SK-N-SH (cell line): ENCODE measurements at regions of chr2 and their contacts with region 1.

Region 1: GRCh38 chr2:175690113-175690837 is 311.8 kb downstream of the LNPK start:
- DNase-seq: peak; percentile 24
- H3K4me3 ChIP-seq: no peak overlapping the region
- H3K27ac ChIP-seq: no peak overlapping the region
- H3K4me1 ChIP-seq: peaks cover 0 to 15% of the 10 kb centered on the region in 2 experiments; a peak in 2 of 4 replicates
- H3K27me3 ChIP-seq: peaks cover 8% of the 10 kb centered on the region; the same call in 1 of the 2 replicates
- CTCF ChIP-seq: peak; percentile 83
- EP300 ChIP-seq: no peak
- RAD21 ChIP-seq: peak; percentile 90

Region 2: DNA sequence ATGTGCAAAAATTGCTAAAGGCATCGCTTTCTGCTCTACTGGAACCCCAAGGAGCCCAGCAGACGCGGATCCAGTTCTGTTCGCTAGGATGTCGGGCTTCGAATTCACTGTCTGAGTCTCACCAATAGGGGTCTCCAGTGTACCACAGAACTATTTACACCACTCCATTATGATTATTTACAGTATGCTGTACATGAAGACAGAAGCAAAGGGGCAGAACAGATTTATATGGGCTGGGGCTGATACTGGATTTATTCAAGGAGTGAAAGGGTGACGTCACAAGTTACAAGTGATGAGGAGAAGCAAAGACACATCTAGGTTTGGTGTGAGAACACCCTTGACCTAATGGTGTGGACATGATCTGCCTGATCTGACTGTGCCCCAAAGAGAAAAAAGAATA is 323.5 kb before region 1 on chr2:
- CTCF ChIA-PET with region 1: interaction called, 99 read pairs
- POLR2A ChIA-PET with region 1: no interaction called
- DNase-seq: peak; percentile 49
- H3K4me3 ChIP-seq: peak overlapping the region in 1 of 2 experiments; percentile 47; a peak in 1 of 4 replicates
- H3K27ac ChIP-seq: no peak overlapping the region
- H3K4me1 ChIP-seq: peaks cover 0 to 19% of the 10 kb centered on the region in 2 experiments; a peak in 2 of 4 replicates
- H3K27me3 ChIP-seq: no peaks in the 10 kb centered on the region; the same call in 1 of the 2 replicates
- CTCF ChIP-seq: peak; percentile 83
- EP300 ChIP-seq: no peak; a peak in 1 of 4 replicates
- RAD21 ChIP-seq: peak; percentile 94

Region 3: GRCh38 chr2:176001916-176002687 is 311.8 kb after region 1 on chr2 and contains the start of gene LNPK:
- CTCF ChIA-PET with region 1: interaction called, 32 read pairs
- POLR2A ChIA-PET with region 1: interaction called, 5 read pairs
- DNase-seq: peak; percentile 97
- H3K4me3 ChIP-seq: peak within 1 kb of the TSS; percentile 77 to 91
- H3K27ac ChIP-seq: peak within 1 kb of the TSS; percentile 58 to 91; a peak in 3 of 4 replicates
- H3K4me1 ChIP-seq: peaks cover 4 to 8% of the 10 kb centered on the region in 2 experiments; a peak in 3 of 4 replicates
- H3K27me3 ChIP-seq: no peaks in the 10 kb centered on the region
- CTCF ChIP-seq: no peak
- EP300 ChIP-seq: peak in 1 of 2 experiments; percentile 34; a peak in 1 of 4 replicates
- RAD21 ChIP-seq: no peak
- polyA plus RNA-seq, gene LNPK: 5.0 and 6.4 TPM in 2 replicates